Tibial artery (tissue), 4 donors: ENCODE measurements at regions of chr1 and their contacts with region 1.

Region 1: DNA sequence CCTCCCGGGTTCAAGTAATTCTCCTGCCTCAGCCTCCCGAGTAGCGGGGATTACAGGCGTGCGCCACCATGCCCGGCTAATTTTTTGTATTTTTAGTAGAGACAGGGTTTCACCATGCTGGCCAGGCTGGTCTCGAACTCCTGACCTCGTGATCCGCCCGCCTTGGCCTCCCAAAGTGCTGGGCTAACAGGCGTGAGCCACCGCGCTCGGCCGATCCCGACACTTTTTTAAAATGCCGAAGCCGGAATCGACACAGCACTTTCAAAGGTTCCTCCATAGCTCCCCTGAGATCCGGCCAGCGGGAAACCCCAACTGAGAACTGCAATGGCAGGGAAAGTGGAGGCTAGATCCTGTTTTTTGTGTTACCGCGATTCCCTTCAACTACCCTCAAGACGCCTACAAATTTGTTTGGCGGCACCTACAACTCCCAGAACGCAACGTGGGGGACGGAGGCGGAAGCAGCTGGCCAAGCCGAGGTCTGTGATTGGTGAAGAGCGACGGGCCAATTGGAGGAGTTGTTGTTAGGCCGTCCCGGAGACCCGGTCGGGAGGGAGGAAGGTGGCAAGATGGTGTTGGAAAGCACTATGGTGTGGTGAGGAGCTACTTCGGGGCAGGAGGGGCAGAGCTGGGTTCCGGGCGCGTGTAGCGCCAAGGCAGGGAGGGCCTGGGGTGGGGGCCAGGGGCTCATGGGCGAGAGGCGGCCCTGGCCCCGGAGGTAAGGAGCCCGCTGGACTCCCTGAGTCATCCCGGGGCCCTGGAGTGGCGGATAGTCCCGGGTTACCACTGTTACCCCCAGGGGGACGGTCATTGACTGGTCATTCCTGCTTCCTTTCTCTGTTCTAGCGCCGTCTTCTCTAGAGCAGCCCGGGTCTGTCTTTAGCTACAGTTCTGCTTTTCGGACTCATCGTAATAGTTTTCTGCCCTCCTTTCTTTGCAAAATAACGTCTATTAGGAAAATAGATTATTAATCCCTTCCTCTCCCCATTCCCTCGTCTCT is at the start of gene PSMD4:
- DNase-seq: peak; percentile 95 to 97
- H3K4me3 ChIP-seq: peak within 1 kb of the TSS; percentile 82 to 99
- H3K27ac ChIP-seq: peak within 1 kb of the TSS; percentile 89 to 94
- H3K4me1 ChIP-seq: peaks cover 0 to 22% (median 15%) of the 10 kb centered on the region in 4 donors
- H3K27me3 ChIP-seq: no peaks in the 10 kb centered on the region
- CTCF ChIP-seq: peak in 1 of 2 experiments; percentile 5

Region 2: DNA sequence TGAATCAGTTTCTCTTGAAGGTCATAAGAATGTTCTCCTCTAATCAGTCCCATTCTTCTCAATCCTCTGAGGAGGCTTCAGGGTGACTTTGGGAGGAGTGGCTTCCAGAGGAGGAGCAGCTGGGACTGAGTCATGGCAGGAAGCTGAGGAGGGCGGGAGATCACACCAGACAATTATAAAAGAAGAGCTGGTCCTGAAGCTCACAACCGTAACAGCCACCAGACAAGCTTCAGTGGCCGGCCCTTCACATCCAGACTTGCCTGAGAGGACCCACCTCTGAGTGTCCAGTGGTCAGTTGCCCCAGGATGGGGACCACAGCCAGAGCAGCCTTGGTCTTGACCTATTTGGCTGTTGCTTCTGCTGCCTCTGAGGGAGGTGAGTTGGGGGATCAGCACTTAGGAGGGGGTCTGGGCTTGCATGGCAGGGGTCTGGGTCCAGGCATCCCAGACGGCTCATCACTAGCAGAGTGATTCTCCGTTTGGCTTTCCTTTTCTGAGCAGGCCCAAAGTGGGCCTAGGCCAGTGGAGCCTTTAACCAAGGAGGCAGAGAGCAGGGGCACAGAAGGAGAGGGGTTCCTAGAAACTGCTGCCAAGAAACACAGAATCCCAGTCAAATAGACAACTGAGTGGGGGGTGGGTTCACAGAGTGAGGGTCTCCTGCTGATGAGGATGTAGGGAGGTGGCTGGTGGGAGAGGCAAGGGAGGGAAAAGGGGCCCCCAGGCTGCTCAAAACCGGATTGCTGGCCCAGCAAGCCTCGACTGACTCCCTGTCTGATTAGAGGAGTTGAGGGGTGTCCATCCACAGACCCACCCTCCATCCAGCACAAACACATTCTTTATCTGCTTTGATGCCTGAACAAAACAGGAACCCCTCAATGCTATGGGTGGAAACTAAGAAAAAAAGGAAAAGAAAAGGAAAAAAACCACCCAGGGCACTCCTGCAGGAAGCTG is 746.3 kb before region 1 on chr1 and contains the start of gene ECM1:
- intact Hi-C with region 1: no loop called
- DNase-seq: peak; percentile 76 to 77
- H3K4me3 ChIP-seq: peak within 1 kb of the TSS; percentile 3 to 25
- H3K27ac ChIP-seq: peak within 1 kb of the TSS; percentile 60 to 65
- H3K4me1 ChIP-seq: peaks cover 0 to 15% (median 7%) of the 10 kb centered on the region in 4 donors
- H3K27me3 ChIP-seq: no peaks in the 10 kb centered on the region
- CTCF ChIP-seq: no peak

Region 3: DNA sequence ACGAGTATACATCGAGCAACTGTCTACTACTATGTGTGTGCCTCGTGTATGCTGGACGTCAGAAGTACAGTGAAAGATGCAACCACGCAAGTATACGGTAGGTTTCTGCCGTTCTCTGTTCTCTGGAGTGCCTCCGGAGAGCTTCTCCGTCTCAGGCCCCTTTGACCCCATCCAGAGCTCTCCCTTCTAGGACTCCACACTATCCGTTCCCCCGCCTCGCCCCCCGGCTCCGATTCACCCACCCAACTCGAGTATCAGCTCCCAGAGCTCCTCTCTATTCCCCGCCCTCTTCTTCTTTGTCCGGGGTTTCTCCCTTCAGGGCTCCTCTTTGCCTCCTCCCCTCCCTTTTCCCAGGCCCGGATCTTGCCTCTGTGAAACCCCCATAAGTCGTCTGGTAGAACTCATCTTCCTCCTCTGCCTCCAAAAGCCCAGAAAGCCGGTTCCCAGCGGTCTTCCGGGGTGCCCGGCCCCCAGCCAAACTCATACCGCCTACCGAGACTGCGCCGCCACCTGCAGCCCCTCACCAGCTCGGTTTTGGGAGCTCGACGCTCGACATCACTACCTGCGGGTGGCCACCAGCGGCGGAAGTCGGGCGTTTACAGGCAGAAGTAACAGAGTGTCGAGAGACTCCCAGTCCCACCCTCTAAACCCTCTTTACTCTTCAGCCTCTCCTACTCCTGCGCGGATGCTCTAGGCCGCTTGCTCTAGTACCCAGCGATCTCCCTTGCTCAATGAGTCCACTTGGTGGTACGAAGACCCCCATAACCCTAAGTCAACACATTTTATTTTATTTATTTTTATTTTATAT is 64.7 kb before region 1 on chr1 and contains the start of gene VPS72:
- intact Hi-C with region 1: loop called (anchors 5 kb)
- DNase-seq: peak; percentile 87 to 90
- H3K4me3 ChIP-seq: peak within 1 kb of the TSS; percentile 85 to 91
- H3K27ac ChIP-seq: peak within 1 kb of the TSS; percentile 92 to 95
- H3K4me1 ChIP-seq: peaks cover 0 to 34% (median 25%) of the 10 kb centered on the region in 4 donors
- H3K27me3 ChIP-seq: no peaks in the 10 kb centered on the region
- CTCF ChIP-seq: peak in 1 of 2 experiments; percentile 49

Region 4: GRCh38 chr1:151210830-151211229 is 43.7 kb before region 1 on chr1:
- intact Hi-C with region 1: no loop called
- DNase-seq: peak in 1 of 2 donors; percentile 1
- H3K4me3 ChIP-seq: no peak overlapping the region
- H3K27ac ChIP-seq: peak overlapping the region in 1 of 2 donors; percentile 35
- H3K4me1 ChIP-seq: peaks cover 0 to 52% (median 4%) of the 10 kb centered on the region in 4 donors
- H3K27me3 ChIP-seq: no peaks in the 10 kb centered on the region
- CTCF ChIP-seq: no peak